ENCODE measurements at regions of chr2 and their contacts with region 1.

Region 1: DNA sequence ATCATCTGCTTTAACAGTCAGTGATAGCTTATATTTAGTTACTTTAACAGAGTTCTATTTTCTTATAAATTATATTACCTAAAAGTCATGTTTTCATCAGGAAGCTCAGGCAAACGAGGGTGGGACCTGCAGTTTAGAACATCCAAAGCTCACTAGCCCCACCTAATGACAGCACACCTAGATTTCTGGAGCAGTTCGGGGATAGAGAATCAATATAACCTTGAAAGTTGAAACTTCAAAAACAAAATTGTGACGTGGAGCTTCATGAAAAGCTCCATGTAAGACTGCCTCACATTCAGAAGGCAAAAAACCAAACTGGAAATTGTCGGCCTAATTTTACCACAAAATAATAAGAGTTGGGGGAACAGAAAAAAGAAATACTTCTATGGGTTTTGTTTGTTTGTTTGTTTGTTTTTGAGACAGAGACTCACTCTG is 185.9 kb upstream of the CCDC150 start:
- DNase-seq: peak; percentile 58
- ATAC-seq: peak; percentile 51
- H3K4me3 Mint-ChIP-seq: no peak overlapping the region
- H3K27ac Mint-ChIP-seq: no peak overlapping the region
- H3K4me1 Mint-ChIP-seq: peaks cover 2% of the 10 kb centered on the region
- H3K27me3 Mint-ChIP-seq: peaks cover 22% of the 10 kb centered on the region

Region 2: DNA sequence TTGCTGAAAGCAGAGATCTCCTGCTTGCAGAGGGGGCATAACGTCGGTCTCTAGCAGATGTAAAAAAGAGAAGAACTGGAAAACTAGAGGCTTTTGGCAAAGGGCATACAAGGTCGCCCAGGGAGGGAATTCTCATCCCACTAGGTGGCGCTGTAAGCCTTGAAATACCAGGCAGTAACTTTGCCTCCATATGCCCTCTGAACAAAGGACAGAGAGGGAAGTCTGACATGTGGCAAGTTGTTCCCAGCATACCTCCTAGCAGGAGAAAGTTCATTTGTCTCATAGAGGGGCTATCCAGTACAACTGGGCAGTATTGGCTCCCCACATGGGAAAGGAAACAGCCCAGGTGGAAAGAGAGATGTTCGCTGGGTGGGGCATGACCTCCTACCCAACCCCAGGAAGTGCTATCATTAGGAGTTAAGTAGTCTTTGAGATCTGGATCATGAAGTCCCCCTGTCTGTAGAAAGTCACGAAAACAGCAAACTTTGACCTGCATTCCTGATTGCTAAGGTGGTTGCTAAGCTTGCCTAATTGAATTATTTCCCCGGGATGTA is 322.2 kb before region 1 on chr2:
- CTCF ChIA-PET with region 1: no interaction called
- POLR2A ChIA-PET with region 1: no interaction called
- intact Hi-C with region 1: loop called (anchors 1 kb)
- DNase-seq: peak; percentile 83
- ATAC-seq: peak; percentile 62
- H3K4me3 Mint-ChIP-seq: no peak overlapping the region
- H3K27ac Mint-ChIP-seq: peak overlapping the region; percentile 65
- H3K4me1 Mint-ChIP-seq: peaks cover 5% of the 10 kb centered on the region
- H3K27me3 Mint-ChIP-seq: no peaks in the 10 kb centered on the region

Region 3: GRCh38 chr2:196464311-196464710 is 10.7 kb after region 1 on chr2:
- CTCF ChIA-PET with region 1: interaction called, 11 read pairs
- POLR2A ChIA-PET with region 1: no interaction called
- intact Hi-C with region 1: no loop called
- DNase-seq: no peak
- ATAC-seq: no peak
- H3K4me3 Mint-ChIP-seq: no peak overlapping the region
- H3K27ac Mint-ChIP-seq: no peak overlapping the region
- H3K4me1 Mint-ChIP-seq: peaks cover 6% of the 10 kb centered on the region
- H3K27me3 Mint-ChIP-seq: peaks cover 31% of the 10 kb centered on the region

Region 4: DNA sequence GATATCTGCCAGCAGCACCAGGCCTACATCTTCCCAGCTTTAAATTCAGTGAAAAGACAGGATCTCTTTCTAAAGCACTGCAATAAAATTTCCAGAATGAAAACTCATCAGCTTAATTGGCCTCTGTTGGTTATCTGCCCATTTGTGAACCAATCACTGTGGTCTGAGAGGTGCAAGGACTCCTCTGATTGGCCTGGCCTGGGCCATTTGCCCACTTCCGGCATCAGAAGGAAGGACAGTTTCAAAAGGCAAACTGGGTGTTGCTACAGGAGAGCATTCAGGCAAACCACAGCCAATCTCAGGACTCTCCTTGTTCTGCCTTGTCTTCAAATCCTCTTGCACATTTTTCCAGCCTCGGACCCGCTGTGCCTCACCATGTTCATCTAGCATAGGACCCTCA is 22.0 kb after region 1 on chr2:
- CTCF ChIA-PET with region 1: no interaction called
- POLR2A ChIA-PET with region 1: no interaction called
- intact Hi-C with region 1: no loop called
- DNase-seq: no peak
- ATAC-seq: no peak
- H3K4me3 Mint-ChIP-seq: no peak overlapping the region
- H3K27ac Mint-ChIP-seq: no peak overlapping the region
- H3K4me1 Mint-ChIP-seq: no peaks in the 10 kb centered on the region
- H3K27me3 Mint-ChIP-seq: peaks cover 9% of the 10 kb centered on the region

Region 5: GRCh38 chr2:196489371-196489770 is 35.7 kb after region 1 on chr2:
- CTCF ChIA-PET with region 1: no interaction called
- POLR2A ChIA-PET with region 1: no interaction called
- intact Hi-C with region 1: no loop called
- DNase-seq: no peak
- ATAC-seq: no peak
- H3K4me3 Mint-ChIP-seq: no peak overlapping the region
- H3K27ac Mint-ChIP-seq: no peak overlapping the region
- H3K4me1 Mint-ChIP-seq: no peaks in the 10 kb centered on the region
- H3K27me3 Mint-ChIP-seq: peaks cover 31% of the 10 kb centered on the region

Region 6: DNA sequence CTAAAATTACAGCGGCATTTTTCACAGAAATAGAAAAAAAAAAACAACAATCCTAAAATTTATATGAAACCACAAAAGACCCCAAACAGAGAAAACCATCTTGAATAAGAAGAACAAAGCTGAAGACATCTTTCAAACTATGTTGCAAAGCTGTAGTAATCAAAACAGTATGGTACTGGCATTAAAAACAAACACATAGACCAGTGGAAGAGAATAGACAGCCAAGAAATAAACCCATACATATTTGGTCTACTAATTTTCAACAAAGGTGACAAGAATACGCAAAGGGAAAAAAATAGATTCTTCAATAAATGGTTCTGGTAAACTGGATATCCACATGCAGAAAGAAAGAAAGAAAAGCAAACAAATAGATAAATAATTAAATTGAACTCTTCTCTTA is 176.9 kb after region 1 on chr2:
- CTCF ChIA-PET with region 1: no interaction called
- POLR2A ChIA-PET with region 1: no interaction called
- intact Hi-C with region 1: no loop called
- DNase-seq: no peak
- ATAC-seq: no peak
- H3K4me3 Mint-ChIP-seq: no peak overlapping the region
- H3K27ac Mint-ChIP-seq: no peak overlapping the region
- H3K4me1 Mint-ChIP-seq: no peaks in the 10 kb centered on the region
- H3K27me3 Mint-ChIP-seq: peaks cover 8% of the 10 kb centered on the region

Region 7: DNA sequence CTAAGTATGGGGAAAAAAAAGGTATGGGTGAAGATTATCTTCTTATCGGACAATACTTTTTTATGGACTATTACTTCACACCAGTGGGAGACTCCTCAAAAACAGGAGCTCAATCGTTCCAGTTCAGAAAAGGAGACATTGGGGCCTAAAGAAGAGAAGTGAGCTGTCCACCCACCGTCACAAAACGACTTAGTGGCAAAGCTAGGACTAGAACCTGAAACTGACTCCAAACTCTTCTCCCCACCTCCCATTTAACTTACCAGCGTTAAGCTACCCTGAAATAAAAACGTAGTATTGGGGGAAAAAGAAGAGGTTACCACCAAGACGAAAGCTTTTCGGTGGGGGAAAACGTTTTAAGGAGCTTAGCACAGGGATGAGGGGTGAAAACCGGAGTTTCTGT is 345.4 kb after region 1 on chr2:
- CTCF ChIA-PET with region 1: no interaction called
- POLR2A ChIA-PET with region 1: no interaction called
- intact Hi-C with region 1: no loop called
- DNase-seq: no peak
- ATAC-seq: peak; percentile 5
- H3K4me3 Mint-ChIP-seq: peak overlapping the region; percentile 85
- H3K27ac Mint-ChIP-seq: peak overlapping the region; percentile 97
- H3K4me1 Mint-ChIP-seq: peaks cover 38% of the 10 kb centered on the region
- H3K27me3 Mint-ChIP-seq: peaks cover 2% of the 10 kb centered on the region